Activated CD8-positive, alpha-beta T cell treated with anti-CD3 and anti-CD28 coated beads, Interleukin-2, amount 10 ng/mL, durations not matched to agents 7 days and 5 days (primary cell): ENCODE measurements at regions of chr1 and their contacts with region 1.

Region 1: GRCh38 chr1:155250633-155251449 is 4.4 kb downstream of the ENTREP3 start:
- DNase-seq: peak; percentile 97
- ATAC-seq: peak; percentile 96
- H3K4me3 Mint-ChIP-seq: peak overlapping the region; percentile 69
- H3K27ac Mint-ChIP-seq: peak overlapping the region; percentile 77
- H3K4me1 Mint-ChIP-seq: peaks cover 34% of the 10 kb centered on the region
- H3K27me3 Mint-ChIP-seq: no peaks in the 10 kb centered on the region

Region 2: DNA sequence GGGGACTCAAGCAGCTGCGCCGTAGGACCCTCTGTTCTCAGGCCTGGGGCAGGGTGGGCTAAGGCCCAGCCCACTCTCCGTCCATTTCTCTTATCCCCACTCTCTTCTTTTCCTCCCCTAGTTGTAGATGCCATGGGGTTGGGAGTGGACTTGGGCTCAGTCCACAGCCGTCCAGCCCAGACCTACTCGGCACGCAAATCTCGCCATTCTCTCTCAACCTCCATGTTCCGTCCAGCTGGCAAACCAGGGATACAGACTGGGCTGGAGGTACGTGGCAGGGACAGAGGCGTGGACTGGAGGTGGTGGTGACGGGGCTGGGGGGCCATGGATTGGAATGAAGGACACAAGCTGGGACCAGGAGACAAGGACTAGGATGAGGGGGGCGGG is 159.1 kb before region 1 on chr1:
- CTCF ChIA-PET with region 1: no interaction called
- POLR2A ChIA-PET with region 1: no interaction called
- DNase-seq: no peak
- ATAC-seq: no peak
- H3K4me3 Mint-ChIP-seq: no peak overlapping the region
- H3K27ac Mint-ChIP-seq: no peak overlapping the region
- H3K4me1 Mint-ChIP-seq: peaks cover 7% of the 10 kb centered on the region
- H3K27me3 Mint-ChIP-seq: peaks cover 16% of the 10 kb centered on the region

Region 3: GRCh38 chr1:155208541-155209311 is 42.1 kb before region 1 on chr1 and contains the start of gene MTX1:
- CTCF ChIA-PET with region 1: interaction called, 26 read pairs
- POLR2A ChIA-PET with region 1: interaction called, 3 read pairs
- DNase-seq: peak; percentile 91
- ATAC-seq: peak; percentile 75
- H3K4me3 Mint-ChIP-seq: peak within 1 kb of the TSS; percentile 90
- H3K27ac Mint-ChIP-seq: peak within 1 kb of the TSS; percentile 92
- H3K4me1 Mint-ChIP-seq: peaks cover 30% of the 10 kb centered on the region
- H3K27me3 Mint-ChIP-seq: no peaks in the 10 kb centered on the region
- total RNA-seq, gene MTX1: 43.0 to 46.3 TPM

Region 4: GRCh38 chr1:155261852-155262673 is 11.2 kb after region 1 on chr1 and contains the start of gene SCAMP3:
- CTCF ChIA-PET with region 1: interaction called, 120 read pairs
- POLR2A ChIA-PET with region 1: interaction called, 20 read pairs
- DNase-seq: peak; percentile 94
- ATAC-seq: peak; percentile 95
- H3K4me3 Mint-ChIP-seq: peak within 1 kb of the TSS; percentile 98
- H3K27ac Mint-ChIP-seq: peak within 1 kb of the TSS; percentile 93
- H3K4me1 Mint-ChIP-seq: peaks cover 42% of the 10 kb centered on the region
- H3K27me3 Mint-ChIP-seq: no peaks in the 10 kb centered on the region
- total RNA-seq, gene SCAMP3: 77.9 to 84.2 TPM

Region 5: DNA sequence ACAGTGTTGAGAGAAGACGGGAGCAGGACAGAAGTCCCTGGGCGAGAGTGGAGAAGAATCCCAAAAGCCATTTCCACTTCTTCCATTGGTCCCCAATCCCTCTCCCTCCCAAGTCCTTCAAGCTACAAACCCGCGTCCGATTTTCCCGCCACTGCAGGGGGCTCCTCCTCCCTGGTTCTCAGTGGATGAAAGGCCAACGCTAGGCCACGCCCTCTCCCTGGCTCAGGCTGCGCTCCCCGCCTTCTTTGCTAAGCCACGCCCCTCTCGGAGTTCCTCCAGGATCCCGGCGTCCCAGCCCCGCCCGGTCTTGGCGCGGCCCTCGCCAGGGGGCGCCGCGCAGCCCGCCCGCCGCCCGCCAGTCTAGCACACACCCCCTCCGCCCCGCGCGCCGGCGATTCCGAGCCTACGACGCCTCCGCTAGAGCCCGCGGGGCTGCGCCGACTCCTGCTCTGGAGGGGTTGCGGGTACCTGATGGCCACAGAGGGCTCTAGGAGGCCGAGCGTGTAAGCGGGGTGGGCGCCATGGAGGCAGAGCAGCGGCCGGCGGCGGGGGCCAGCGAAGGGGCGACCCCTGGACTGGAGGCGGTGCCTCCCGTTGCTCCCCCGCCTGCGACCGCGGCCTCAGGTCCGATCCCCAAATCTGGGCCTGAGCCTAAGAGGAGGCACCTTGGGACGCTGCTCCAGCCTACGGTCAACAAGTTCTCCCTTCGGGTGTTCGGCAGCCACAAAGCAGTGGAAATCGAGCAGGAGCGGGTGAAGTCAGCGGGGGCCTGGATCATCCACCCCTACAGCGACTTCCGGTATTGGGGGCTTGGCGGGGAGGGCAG is 26.4 kb after region 1 on chr1 and contains the start of gene HCN3:
- CTCF ChIA-PET with region 1: interaction called, 52 read pairs
- POLR2A ChIA-PET with region 1: interaction called, 5 read pairs
- DNase-seq: peak; percentile 95
- ATAC-seq: peak; percentile 71
- H3K4me3 Mint-ChIP-seq: peak within 1 kb of the TSS; percentile 67
- H3K27ac Mint-ChIP-seq: peak within 1 kb of the TSS; percentile 1
- H3K4me1 Mint-ChIP-seq: peaks cover 32% of the 10 kb centered on the region
- H3K27me3 Mint-ChIP-seq: no peaks in the 10 kb centered on the region
- total RNA-seq, gene HCN3: 4.9 to 5.1 TPM

Region 6: GRCh38 chr1:155316922-155317321 is 66.1 kb after region 1 on chr1:
- CTCF ChIA-PET with region 1: interaction called, 190 read pairs
- POLR2A ChIA-PET with region 1: interaction called, 4 read pairs
- DNase-seq: no peak
- ATAC-seq: no peak
- H3K4me3 Mint-ChIP-seq: no peak overlapping the region
- H3K27ac Mint-ChIP-seq: no peak overlapping the region
- H3K4me1 Mint-ChIP-seq: peaks cover 52% of the 10 kb centered on the region
- H3K27me3 Mint-ChIP-seq: no peaks in the 10 kb centered on the region

Region 7: GRCh38 chr1:155504207-155504606 is 253.4 kb after region 1 on chr1:
- CTCF ChIA-PET with region 1: interaction called, 16 read pairs
- POLR2A ChIA-PET with region 1: no interaction called
- DNase-seq: no peak
- ATAC-seq: no peak
- H3K4me3 Mint-ChIP-seq: no peak overlapping the region
- H3K27ac Mint-ChIP-seq: no peak overlapping the region
- H3K4me1 Mint-ChIP-seq: peaks cover 18% of the 10 kb centered on the region
- H3K27me3 Mint-ChIP-seq: no peaks in the 10 kb centered on the region

Region 8: GRCh38 chr1:155598842-155599331 is 348.0 kb after region 1 on chr1:
- CTCF ChIA-PET with region 1: interaction called, 14 read pairs
- POLR2A ChIA-PET with region 1: no interaction called
- DNase-seq: no peak
- ATAC-seq: peak; percentile 44
- H3K4me3 Mint-ChIP-seq: peak overlapping the region; percentile 68
- H3K27ac Mint-ChIP-seq: peak overlapping the region; percentile 82
- H3K4me1 Mint-ChIP-seq: peaks cover 11% of the 10 kb centered on the region
- H3K27me3 Mint-ChIP-seq: no peaks in the 10 kb centered on the region